H1 (cell line): ENCODE measurements at regions of chr17 and their contacts with region 1.

Region 1: DNA sequence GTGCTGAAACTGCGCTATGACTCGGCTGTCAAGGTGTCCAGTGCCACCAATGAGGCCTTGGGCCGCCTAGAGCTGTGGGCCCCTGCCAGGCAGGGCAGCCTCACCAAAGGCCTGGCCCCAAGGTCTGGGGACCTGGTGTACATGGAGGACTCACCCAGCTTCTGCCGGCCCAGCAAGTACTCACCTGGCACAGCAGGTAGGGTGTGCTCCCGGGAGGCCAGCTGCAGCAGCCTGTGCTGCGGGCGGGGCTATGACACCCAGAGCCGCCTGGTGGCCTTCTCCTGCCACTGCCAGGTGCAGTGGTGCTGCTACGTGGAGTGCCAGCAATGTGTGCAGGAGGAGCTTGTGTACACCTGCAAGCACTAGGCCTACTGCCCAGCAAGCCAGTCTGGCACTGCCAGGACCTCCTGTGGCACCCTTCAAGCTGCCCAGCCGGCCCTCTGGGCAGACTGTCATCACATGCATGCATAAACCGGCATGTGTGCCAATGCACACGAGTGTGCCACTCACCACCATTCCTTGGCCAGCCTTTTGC is 25.0 kb downstream of the WNT9B start:
- DNase-seq: peak in 1 of 2 experiments; percentile 74
- H3K4me3 ChIP-seq: no peak overlapping the region
- H3K27ac ChIP-seq: no peak overlapping the region
- H3K4me1 ChIP-seq: no peaks in the 10 kb centered on the region
- H3K27me3 ChIP-seq: no peaks in the 10 kb centered on the region; a peak in 2 of 7 replicates
- CTCF ChIP-seq: peak; percentile 73 to 79 (median 74)
- EP300 ChIP-seq: no peak
- POLR2A ChIP-seq: no peak
- RAD21 ChIP-seq: peak; percentile 54 to 68; a peak in 3 of 4 replicates

Region 2: DNA sequence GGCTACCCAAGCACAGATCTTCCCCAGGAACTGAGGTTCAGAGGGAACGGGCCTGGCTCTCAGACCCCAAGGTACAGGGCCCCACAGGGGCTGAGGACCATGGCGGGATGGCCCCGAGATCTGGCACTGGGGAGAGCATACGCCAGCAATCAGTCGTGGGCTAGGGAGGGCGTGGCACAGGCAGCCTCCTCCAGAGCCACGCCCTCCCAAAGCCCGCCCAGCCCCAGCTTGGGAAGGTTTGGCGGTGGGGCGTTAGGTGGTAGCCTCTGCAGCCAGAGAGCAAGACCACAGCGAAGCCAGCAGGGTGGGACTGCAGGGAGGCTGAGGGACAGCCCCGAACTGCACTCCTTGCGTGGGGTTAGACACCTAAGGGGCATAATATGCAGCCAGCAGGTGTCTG is 13.5 kb before region 1 on chr17:
- CTCF ChIA-PET with region 1: interaction called, 22 read pairs
- POLR2A ChIA-PET with region 1: interaction called, 3 read pairs
- DNase-seq: peak in 1 of 2 experiments; percentile 82
- H3K4me3 ChIP-seq: no peak overlapping the region
- H3K27ac ChIP-seq: no peak overlapping the region
- H3K4me1 ChIP-seq: peaks cover 0 to 8% (median 3%) of the 10 kb centered on the region in 4 experiments; a peak in 5 of 7 replicates
- H3K27me3 ChIP-seq: peaks cover 0 to 5% (median 0%) of the 10 kb centered on the region in 4 experiments; a peak in 2 of 7 replicates
- CTCF ChIP-seq: no peak
- EP300 ChIP-seq: no peak
- POLR2A ChIP-seq: no peak
- RAD21 ChIP-seq: no peak

Region 3: GRCh38 chr17:47009759-47010594 is 133.6 kb after region 1 on chr17:
- CTCF ChIA-PET with region 1: no interaction called
- POLR2A ChIA-PET with region 1: no interaction called
- DNase-seq: no peak
- H3K4me3 ChIP-seq: no peak overlapping the region
- H3K27ac ChIP-seq: no peak overlapping the region
- H3K4me1 ChIP-seq: no peaks in the 10 kb centered on the region
- H3K27me3 ChIP-seq: no peaks in the 10 kb centered on the region
- CTCF ChIP-seq: no peak
- EP300 ChIP-seq: no peak
- POLR2A ChIP-seq: no peak
- RAD21 ChIP-seq: no peak